Activated CD8-positive, alpha-beta T cell treated with anti-CD3 and anti-CD28 coated beads, Interleukin-2, amount 10 ng/mL, durations not matched to agents 7 days and 5 days (primary cell): ENCODE measurements at regions of chr11 and their contacts with region 1.

Region 1: DNA sequence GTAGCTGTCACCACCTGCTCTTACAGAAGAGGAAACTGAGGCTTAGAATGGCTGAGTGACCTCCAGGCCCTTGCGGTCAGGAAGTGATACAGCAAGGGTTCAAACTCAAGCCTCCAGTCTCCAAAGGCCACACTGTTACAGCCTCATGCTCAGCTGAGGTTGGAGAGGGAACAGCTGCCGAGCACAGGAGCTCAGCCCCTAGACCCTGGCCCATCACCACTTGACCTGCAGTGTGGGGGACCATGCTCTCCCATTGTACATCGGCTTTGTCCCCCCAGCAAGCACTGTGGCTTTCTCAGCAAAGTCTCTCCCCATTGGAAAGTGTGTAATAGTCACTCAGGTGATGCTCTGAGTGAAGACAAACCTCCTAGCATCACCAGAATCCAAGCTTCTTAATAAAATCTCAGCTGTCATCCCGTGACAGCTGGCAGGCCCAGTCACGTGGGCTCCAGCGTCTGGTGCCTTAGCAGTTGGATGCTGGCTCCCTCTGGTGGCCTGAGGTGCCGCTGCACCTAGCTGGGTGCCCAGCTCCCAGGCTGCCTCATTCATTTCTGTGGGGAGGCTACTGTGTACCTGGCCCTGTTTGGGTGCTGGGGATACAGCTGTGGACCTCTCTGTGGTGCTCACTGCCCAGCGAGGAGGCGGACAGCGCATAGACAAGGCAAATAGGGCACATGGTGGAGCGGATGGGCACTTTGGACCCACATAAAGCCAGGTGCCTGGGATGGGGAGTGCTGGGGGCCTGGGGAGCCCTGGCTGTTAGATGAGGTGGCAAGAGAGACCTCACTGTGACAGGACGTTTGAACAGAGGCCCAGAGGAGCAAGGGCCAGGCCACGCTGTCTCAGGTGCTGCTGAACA is 19.1 kb upstream of the MYRF start:
- DNase-seq: peak; percentile 88
- ATAC-seq: peak; percentile 96
- H3K4me3 Mint-ChIP-seq: no peak overlapping the region
- H3K27ac Mint-ChIP-seq: no peak overlapping the region
- H3K4me1 Mint-ChIP-seq: peaks cover 2% of the 10 kb centered on the region
- H3K27me3 Mint-ChIP-seq: no peaks in the 10 kb centered on the region

Region 2: GRCh38 chr11:61679893-61680621 is 53.3 kb before region 1 on chr11 and contains the start of gene DAGLA:
- CTCF ChIA-PET with region 1: interaction called, 44 read pairs
- POLR2A ChIA-PET with region 1: no interaction called
- DNase-seq: peak; percentile 77
- ATAC-seq: peak; percentile 83
- H3K4me3 Mint-ChIP-seq: no peak within 1 kb of the TSS
- H3K27ac Mint-ChIP-seq: no peak within 1 kb of the TSS
- H3K4me1 Mint-ChIP-seq: peaks cover 4% of the 10 kb centered on the region
- H3K27me3 Mint-ChIP-seq: peaks cover 25% of the 10 kb centered on the region
- total RNA-seq, gene DAGLA: 0.05 TPM in 1 of 2 experiments, not detected in the other

Region 3: GRCh38 chr11:61698173-61698948 is 35.0 kb before region 1 on chr11:
- CTCF ChIA-PET with region 1: interaction called, 16 read pairs
- POLR2A ChIA-PET with region 1: no interaction called
- DNase-seq: peak; percentile 41
- ATAC-seq: no peak
- H3K4me3 Mint-ChIP-seq: no peak overlapping the region
- H3K27ac Mint-ChIP-seq: peak overlapping the region; percentile 60
- H3K4me1 Mint-ChIP-seq: peaks cover 45% of the 10 kb centered on the region
- H3K27me3 Mint-ChIP-seq: peaks cover 4% of the 10 kb centered on the region

Region 4: GRCh38 chr11:61711498-61711897 is 21.9 kb before region 1 on chr11:
- CTCF ChIA-PET with region 1: interaction called, 12 read pairs
- POLR2A ChIA-PET with region 1: no interaction called
- DNase-seq: no peak
- ATAC-seq: no peak
- H3K4me3 Mint-ChIP-seq: no peak overlapping the region
- H3K27ac Mint-ChIP-seq: no peak overlapping the region
- H3K4me1 Mint-ChIP-seq: no peaks in the 10 kb centered on the region
- H3K27me3 Mint-ChIP-seq: peaks cover 5% of the 10 kb centered on the region

Region 5: DNA sequence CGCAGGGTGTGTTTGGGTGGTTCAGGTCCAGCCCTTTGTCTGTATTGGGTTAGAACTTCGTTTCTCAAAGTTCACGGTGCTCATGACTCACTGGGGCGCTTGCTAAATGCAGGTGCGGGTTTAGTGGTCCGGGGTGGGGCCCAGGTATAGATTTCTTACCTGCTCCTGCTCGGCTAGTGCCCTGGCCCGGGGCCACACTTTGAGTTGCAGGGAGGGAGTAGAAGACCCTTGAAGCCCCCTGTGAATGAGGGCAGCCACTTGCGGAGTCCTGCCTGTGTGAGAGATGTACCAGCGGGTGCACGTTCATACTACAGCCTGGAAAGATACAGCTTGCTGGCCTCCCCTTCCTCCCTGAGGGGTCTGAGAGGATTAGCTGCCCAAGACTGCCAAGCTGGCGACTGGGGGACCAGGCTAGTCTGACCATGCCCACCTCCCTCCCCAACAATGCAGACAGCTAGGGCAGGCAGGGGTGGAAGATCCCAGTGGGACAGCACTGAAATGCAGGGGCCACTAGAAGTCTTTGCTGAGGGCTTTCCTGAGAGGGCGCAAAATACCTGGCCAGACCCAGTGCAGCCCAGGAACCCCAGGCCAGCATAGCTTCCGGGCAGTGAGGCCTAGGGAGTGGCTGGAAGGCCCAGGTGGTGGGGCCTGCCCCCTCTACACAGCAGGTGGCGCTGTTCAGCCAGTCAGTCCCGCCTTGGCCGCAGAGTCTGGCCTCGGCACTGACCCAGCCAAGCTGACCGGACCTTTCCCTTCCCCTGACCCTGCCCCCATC is 14.0 kb after region 1 on chr11:
- CTCF ChIA-PET with region 1: interaction called, 12 read pairs
- POLR2A ChIA-PET with region 1: no interaction called
- DNase-seq: peak; percentile 62
- ATAC-seq: peak; percentile 54
- H3K4me3 Mint-ChIP-seq: no peak overlapping the region
- H3K27ac Mint-ChIP-seq: no peak overlapping the region
- H3K4me1 Mint-ChIP-seq: no peaks in the 10 kb centered on the region
- H3K27me3 Mint-ChIP-seq: peaks cover 13% of the 10 kb centered on the region